ENCODE measurements at regions of chr17 and their contacts with region 1.

Region 1: DNA sequence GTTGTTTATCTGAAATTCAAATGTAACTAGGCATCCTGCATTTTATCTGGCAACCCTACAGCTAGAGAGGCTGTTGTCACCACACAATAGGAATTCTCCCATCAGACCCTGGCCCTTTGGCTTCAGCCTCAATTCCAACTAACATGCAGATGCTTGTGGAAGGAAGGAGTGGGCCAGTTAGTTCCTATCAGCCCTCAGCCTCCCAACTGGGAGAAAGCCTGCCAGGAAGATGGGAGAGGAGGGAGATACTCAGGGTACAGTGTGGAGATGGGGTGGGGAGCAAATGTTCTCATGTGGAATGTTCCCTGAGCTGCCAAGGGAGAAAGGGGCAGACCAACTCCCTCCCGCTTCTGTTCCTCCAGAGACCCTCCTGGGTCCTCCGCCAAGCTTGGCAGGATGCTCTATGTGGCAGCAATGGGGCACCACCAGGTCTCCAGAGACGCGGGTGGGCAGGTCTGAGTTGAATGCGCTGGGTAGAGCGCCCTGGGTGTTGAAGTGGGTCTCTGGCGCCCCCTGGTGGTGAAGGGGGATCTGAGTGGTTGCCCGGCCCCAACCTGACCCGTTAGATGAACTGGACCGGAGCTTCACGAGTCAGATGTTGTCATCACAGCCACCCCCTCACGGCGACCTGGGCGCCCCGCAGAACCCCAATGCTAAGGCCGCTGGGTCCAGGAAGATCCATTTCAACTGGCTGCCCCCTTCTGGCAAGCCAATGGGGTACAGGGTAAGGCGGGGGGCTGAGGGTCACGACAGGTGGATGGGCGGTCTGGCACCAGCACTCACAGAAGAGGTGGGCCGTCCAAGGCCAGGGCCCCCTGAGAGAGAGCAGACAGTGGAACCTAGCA is 15.2 kb downstream of the GALK1 start:
- DNase-seq: peak; percentile 93
- ATAC-seq: peak; percentile 73
- H3K4me3 Mint-ChIP-seq: no peak overlapping the region
- H3K27ac Mint-ChIP-seq: no peak overlapping the region
- H3K4me1 Mint-ChIP-seq: peaks cover 18% of the 10 kb centered on the region
- H3K27me3 Mint-ChIP-seq: peaks cover 2% of the 10 kb centered on the region

Region 2: GRCh38 chr17:75557075-75557882 is 192.5 kb before region 1 on chr17:
- CTCF ChIA-PET with region 1: no interaction called
- POLR2A ChIA-PET with region 1: no interaction called
- DNase-seq: no peak
- ATAC-seq: no peak
- H3K4me3 Mint-ChIP-seq: no peak overlapping the region
- H3K27ac Mint-ChIP-seq: no peak overlapping the region
- H3K4me1 Mint-ChIP-seq: no peaks in the 10 kb centered on the region
- H3K27me3 Mint-ChIP-seq: no peaks in the 10 kb centered on the region

Region 3: DNA sequence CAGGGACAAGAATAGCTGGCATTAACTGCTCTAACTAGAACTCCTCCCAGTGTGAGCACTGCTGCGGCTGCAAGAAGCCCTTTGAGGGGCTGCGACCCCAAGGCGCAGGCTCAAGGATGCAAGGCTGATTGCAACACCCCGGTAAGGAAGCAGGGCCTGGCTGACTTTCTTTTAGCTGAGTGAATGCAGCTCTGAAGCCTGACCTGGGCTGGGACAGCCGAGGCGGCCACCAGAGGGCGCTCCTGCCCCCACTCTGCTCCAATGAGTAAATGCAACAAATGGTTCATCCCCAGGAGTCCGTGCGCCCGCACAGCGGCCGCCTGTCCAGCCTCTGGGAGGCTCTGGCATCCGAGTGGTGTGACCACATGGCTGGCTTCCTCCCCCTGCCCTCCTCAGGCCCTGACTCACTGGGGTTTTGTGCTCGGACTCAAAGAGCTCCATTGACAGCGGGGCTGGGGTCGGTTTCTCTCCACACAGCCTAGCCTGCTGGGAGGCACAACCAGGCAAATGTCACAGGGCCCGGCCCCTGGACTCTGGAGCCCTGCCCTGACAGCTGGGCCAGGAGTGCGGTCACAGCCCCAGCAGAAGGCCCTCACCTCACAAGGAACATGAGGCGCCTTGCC is 116.8 kb before region 1 on chr17 and contains the start of gene SMIM5:
- CTCF ChIA-PET with region 1: interaction called, 343 read pairs
- POLR2A ChIA-PET with region 1: interaction called, 5 read pairs
- DNase-seq: peak; percentile 88
- ATAC-seq: peak; percentile 89
- H3K4me3 Mint-ChIP-seq: no peak within 1 kb of the TSS
- H3K27ac Mint-ChIP-seq: no peak within 1 kb of the TSS
- H3K4me1 Mint-ChIP-seq: no peaks in the 10 kb centered on the region
- H3K27me3 Mint-ChIP-seq: no peaks in the 10 kb centered on the region
- total RNA-seq, gene SMIM5: 0.31 TPM in 1 of 2 experiments, not detected in the other

Region 4: GRCh38 chr17:75673487-75673886 is 76.3 kb before region 1 on chr17:
- CTCF ChIA-PET with region 1: interaction called, 152 read pairs
- POLR2A ChIA-PET with region 1: interaction called, 6 read pairs
- DNase-seq: no peak
- ATAC-seq: no peak
- H3K4me3 Mint-ChIP-seq: no peak overlapping the region
- H3K27ac Mint-ChIP-seq: no peak overlapping the region
- H3K4me1 Mint-ChIP-seq: peaks cover 17% of the 10 kb centered on the region
- H3K27me3 Mint-ChIP-seq: no peaks in the 10 kb centered on the region

Region 5: DNA sequence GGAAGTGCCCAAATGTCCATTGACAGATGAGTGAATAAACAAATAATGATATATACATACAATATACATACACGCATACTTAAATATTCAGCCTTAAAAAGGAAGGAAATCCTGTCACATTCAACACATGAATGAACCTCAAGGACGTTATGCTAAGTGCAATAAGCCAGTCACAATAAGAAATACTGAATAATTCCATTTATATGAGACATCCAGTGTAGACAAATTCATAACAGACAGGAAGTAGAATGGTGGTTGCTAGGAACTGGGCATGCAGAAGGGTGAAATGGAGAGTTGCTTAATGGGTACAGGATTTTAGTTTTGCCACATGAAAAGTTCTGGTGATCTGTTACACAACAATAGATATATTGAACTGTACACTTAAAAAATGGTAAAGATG is 37.3 kb before region 1 on chr17:
- CTCF ChIA-PET with region 1: interaction called, 13 read pairs
- POLR2A ChIA-PET with region 1: interaction called, 3 read pairs
- DNase-seq: no peak
- ATAC-seq: no peak
- H3K4me3 Mint-ChIP-seq: no peak overlapping the region
- H3K27ac Mint-ChIP-seq: no peak overlapping the region
- H3K4me1 Mint-ChIP-seq: no peaks in the 10 kb centered on the region
- H3K27me3 Mint-ChIP-seq: peaks cover 6% of the 10 kb centered on the region

Region 6: GRCh38 chr17:75779231-75779986 is 29.6 kb after region 1 on chr17:
- CTCF ChIA-PET with region 1: interaction called, 33 read pairs
- POLR2A ChIA-PET with region 1: interaction called, 12 read pairs
- DNase-seq: peak; percentile 97
- ATAC-seq: peak; percentile 70
- H3K4me3 Mint-ChIP-seq: peak overlapping the region; percentile 86
- H3K27ac Mint-ChIP-seq: peak overlapping the region; percentile 97
- H3K4me1 Mint-ChIP-seq: peaks cover 51% of the 10 kb centered on the region
- H3K27me3 Mint-ChIP-seq: peaks cover 3% of the 10 kb centered on the region

Region 7: GRCh38 chr17:75845049-75845860 is 95.5 kb after region 1 on chr17:
- CTCF ChIA-PET with region 1: interaction called, 10 read pairs
- POLR2A ChIA-PET with region 1: no interaction called
- DNase-seq: peak; percentile 74
- ATAC-seq: peak; percentile 49
- H3K4me3 Mint-ChIP-seq: peak overlapping the region; percentile 57
- H3K27ac Mint-ChIP-seq: peak overlapping the region; percentile 77
- H3K4me1 Mint-ChIP-seq: peaks cover 36% of the 10 kb centered on the region
- H3K27me3 Mint-ChIP-seq: no peaks in the 10 kb centered on the region